Activated CD4-positive, alpha-beta T cell treated with anti-CD3 and anti-CD28 coated beads, Interleukin-2, amount 10 ng/mL, durations not matched to agents 24 days and 14 days (primary cell): ENCODE measurements at regions of chr19 and their contacts with region 1.

Region 1: DNA sequence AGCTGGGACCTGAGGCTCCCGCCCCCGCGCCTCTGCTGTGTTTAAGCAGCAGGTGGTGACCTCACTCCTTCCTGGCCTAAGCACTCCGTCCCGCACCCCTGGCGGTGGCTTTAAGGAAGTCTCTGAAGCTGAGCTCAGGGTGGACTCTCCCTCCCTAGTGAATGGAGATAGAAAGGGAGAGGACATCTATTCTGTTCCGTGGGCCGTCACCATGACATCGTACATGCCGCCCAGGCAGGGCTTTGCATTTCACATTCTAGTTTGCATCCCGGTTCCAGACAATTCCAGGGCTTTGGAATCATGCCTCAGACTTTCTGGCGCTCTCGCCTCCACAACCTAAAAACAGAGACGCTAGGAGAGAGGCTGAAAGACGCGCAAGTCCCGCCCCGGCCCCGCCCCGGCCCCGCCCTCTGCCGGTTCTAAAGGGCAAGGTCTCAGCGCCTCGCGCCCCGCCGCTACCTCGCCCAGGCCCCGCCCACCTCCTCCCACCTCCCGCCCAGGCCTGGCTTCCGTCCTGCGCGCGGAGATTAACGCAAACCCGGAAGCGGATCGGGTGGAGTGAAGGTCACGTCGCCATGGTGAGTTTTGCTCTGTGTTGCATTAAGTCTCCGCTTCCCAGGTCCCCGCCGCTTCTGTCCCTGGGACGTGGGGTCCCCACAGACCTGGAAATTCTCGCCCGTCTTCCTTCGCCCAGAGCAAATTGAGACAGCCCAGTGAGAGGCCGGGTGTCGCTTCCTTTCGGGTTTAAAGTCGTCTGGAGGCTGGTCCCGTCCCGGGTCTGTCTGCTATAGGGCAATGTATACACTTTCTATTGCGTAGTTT is at the start of gene ZNF808:
- DNase-seq: peak; percentile 96
- H3K4me3 Mint-ChIP-seq: peak within 1 kb of the TSS; percentile 97
- H3K27ac Mint-ChIP-seq: peak within 1 kb of the TSS; percentile 98
- H3K4me1 Mint-ChIP-seq: peaks cover 22% of the 10 kb centered on the region
- H3K27me3 Mint-ChIP-seq: no peaks in the 10 kb centered on the region
- total RNA-seq, gene ZNF808: 21.2 and 21.6 TPM in 2 replicates

Region 2: DNA sequence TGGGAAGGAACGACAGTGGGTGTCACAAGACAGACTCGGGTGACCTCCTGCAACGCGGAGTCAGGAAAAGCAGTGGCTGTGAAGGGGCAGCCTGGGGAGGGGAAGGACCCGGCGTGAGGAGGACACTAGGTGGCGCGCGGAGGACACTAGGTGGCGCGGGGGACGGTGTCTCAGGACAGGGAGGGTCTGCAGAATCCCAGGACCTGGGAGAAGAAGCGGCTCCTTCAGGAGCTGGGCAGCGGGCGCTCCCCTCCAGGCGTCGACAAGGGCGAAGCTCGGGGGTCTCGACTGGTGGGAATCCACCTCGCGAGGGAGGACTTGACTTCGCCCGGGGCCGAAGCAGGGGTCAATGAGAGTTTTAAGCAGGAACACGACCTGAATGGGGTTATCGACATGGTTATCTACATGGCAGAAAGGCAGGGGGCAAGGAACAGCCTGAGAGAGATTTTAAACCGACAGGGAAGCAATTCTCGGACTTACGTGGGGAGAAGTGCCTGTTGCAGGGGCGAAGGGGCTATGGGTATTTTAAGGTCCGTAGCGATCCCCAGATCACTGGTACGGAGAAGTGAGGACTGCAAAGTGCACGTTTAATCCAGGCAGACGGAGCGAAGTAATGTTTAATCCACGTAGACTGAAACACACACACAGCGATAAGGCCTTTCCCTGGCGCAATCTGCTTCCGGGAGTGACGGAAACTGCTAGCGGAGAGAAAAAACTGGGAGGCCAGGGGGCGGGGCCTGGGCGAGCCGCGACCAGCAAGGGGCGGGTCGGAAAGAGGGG is 387.9 kb before region 1 on chr19 and contains the start of gene ZNF616:
- intact Hi-C with region 1: loop called (anchors 2 kb)
- DNase-seq: peak; percentile 99
- H3K4me3 Mint-ChIP-seq: peak within 1 kb of the TSS; percentile 98
- H3K27ac Mint-ChIP-seq: peak within 1 kb of the TSS; percentile 90
- H3K4me1 Mint-ChIP-seq: peaks cover 17% of the 10 kb centered on the region
- H3K27me3 Mint-ChIP-seq: no peaks in the 10 kb centered on the region
- total RNA-seq, gene ZNF616: 6.1 and 7.1 TPM in 2 replicates

Region 3: DNA sequence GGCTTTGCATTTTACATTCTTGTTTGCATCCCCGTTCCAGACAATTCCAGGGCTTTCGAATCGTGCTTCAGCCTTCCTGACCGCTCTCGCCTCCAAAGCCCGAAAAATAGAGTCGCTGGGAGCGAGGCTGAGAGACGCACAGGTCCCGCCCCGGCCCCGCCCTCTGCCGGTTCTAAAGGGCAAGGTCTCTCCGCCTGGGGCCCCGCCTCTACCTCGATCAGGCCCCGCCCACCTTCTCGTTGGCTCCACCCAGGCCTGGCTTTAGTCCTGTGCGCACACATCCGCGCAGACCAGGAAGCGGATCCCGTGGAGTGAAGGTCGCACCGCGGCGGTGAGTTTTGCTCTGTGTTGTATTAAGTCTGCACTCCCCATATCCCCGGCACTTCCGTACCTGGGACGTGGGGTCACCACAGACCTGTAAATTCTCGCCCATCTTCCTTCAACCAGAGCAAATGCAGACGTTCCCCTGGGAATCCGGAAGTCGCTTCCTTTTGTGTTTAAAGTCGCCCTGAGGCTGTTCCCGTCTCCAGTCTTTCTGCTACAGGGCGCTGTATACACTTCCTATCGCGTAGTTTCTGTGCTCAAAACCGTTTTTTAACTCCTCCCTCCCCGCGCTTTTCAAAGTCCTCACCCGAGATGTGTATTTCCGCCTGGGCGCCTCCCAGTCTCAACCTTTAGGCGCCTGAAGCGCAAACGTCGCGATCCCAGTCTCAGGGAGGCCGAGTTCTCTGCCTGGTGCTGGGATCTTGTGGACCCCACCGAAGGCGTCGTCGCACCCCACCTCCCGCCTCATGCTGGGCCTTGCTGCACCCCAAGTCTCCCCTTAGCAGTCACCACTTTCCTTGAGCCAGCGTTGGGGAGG is 42.9 kb after region 1 on chr19 and contains the start of gene ZNF701:
- intact Hi-C with region 1: loop called (anchors 2 kb)
- DNase-seq: peak; percentile 99
- H3K4me3 Mint-ChIP-seq: peak within 1 kb of the TSS; percentile 88
- H3K27ac Mint-ChIP-seq: peak within 1 kb of the TSS; percentile 89
- H3K4me1 Mint-ChIP-seq: peaks cover 23% of the 10 kb centered on the region
- H3K27me3 Mint-ChIP-seq: no peaks in the 10 kb centered on the region
- total RNA-seq, gene ZNF701: 19.3 and 21.0 TPM in 2 replicates

Region 4: GRCh38 chr19:52637718-52638585 is 110.6 kb after region 1 on chr19 and contains the start of gene ZNF83:
- intact Hi-C with region 1: loop called (anchors 1 kb)
- DNase-seq: peak; percentile 98
- H3K4me3 Mint-ChIP-seq: peak within 1 kb of the TSS; percentile 97
- H3K27ac Mint-ChIP-seq: peak within 1 kb of the TSS; percentile 98
- H3K4me1 Mint-ChIP-seq: peaks cover 11% of the 10 kb centered on the region
- H3K27me3 Mint-ChIP-seq: no peaks in the 10 kb centered on the region
- total RNA-seq, gene ZNF83: 22.1 and 26.3 TPM in 2 replicates

Region 5: GRCh38 chr19:52734893-52735661 is 207.7 kb after region 1 on chr19 and contains the start of gene ZNF611:
- intact Hi-C with region 1: loop called (anchors 5 kb)
- DNase-seq: peak; percentile 100
- H3K4me3 Mint-ChIP-seq: peak within 1 kb of the TSS; percentile 92
- H3K27ac Mint-ChIP-seq: peak within 1 kb of the TSS; percentile 88
- H3K4me1 Mint-ChIP-seq: peaks cover 19% of the 10 kb centered on the region
- H3K27me3 Mint-ChIP-seq: no peaks in the 10 kb centered on the region
- total RNA-seq, gene ZNF611: 15.9 and 18.2 TPM in 2 replicates

Region 6: GRCh38 chr19:53103198-53103944 is 576.0 kb after region 1 on chr19 and contains the start of gene ZNF160:
- intact Hi-C with region 1: loop called (anchors 10 kb)
- DNase-seq: peak; percentile 100
- H3K4me3 Mint-ChIP-seq: peak within 1 kb of the TSS; percentile 93
- H3K27ac Mint-ChIP-seq: peak within 1 kb of the TSS; percentile 90
- H3K4me1 Mint-ChIP-seq: peaks cover 19% of the 10 kb centered on the region
- H3K27me3 Mint-ChIP-seq: no peaks in the 10 kb centered on the region
- total RNA-seq, gene ZNF160: 30.6 and 37.5 TPM in 2 replicates